HEK293 (cell line): ENCODE measurements at regions of chr1 and their contacts with region 1.

Region 1: DNA sequence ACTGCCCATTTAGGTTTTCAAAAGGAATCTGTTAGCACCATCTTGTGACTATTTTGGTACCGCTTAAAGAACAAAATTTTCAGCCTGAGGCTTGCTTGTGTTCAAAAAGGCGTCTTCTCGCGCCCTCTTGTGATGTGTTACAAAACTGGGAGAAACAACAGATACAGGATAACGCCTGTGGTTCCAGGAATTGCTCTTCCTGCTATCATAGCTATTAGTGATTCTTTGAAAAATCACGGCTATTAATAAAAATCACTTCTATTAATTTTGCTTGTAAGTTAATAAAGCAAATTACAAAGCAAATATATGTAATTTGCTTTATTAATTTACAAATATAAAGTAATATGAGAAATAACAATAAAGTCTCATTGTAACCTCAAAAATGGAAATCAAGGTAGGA is 82.2 kb upstream of the ABCD3 start:
- H3K4me3 ChIP-seq: no peak overlapping the region
- H3K27ac ChIP-seq: no peak overlapping the region
- H3K4me1 ChIP-seq: no peaks in the 10 kb centered on the region
- CTCF ChIP-seq: peak; percentile 78

Region 2: DNA sequence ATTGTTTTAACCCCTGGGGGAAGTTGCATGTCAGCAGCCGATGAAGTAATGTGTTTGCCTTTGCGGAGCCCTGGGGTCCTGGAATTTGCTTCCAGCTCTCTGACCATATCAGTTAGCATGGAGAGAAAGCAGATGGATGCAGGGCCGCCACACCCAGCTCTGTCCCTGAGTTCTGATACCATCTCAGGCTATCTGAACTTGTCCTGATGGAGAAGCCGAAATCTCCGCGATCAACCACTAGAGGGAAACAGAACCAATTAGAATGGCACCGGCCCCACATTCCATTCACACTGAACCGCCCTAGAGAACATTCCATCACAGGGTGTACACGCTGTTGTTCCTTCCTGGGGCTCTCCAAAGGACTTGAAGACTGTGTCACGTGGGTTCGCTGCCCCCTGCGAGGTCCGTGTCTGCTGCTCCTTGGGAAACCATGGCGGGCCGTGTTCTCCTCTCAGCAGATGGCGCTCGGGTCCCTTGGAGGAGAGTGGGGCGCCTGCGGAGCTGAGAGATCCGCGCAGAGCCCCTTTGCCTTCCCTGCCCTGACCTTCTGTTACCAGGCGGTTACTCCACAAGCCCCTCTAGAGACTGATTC is 290.4 kb before region 1 on chr1:
- CTCF ChIA-PET with region 1: interaction called, 400 read pairs
- POLR2A ChIA-PET with region 1: no interaction called
- H3K4me3 ChIP-seq: no peak overlapping the region
- H3K27ac ChIP-seq: no peak overlapping the region
- H3K4me1 ChIP-seq: no peaks in the 10 kb centered on the region
- CTCF ChIP-seq: peak; percentile 75

Region 3: GRCh38 chr1:94209425-94209824 is 126.5 kb before region 1 on chr1:
- CTCF ChIA-PET with region 1: interaction called, 10 read pairs
- POLR2A ChIA-PET with region 1: no interaction called
- H3K4me3 ChIP-seq: no peak overlapping the region
- H3K27ac ChIP-seq: no peak overlapping the region
- H3K4me1 ChIP-seq: no peaks in the 10 kb centered on the region
- CTCF ChIP-seq: no peak

Region 4: GRCh38 chr1:94247138-94248094 is 88.5 kb before region 1 on chr1:
- CTCF ChIA-PET with region 1: interaction called, 35 read pairs
- POLR2A ChIA-PET with region 1: no interaction called
- H3K4me3 ChIP-seq: peak overlapping the region; percentile 76
- H3K27ac ChIP-seq: peak overlapping the region; percentile 64; the same call in 1 of the 2 replicates
- H3K4me1 ChIP-seq: no peaks in the 10 kb centered on the region
- CTCF ChIP-seq: no peak

Region 5: DNA sequence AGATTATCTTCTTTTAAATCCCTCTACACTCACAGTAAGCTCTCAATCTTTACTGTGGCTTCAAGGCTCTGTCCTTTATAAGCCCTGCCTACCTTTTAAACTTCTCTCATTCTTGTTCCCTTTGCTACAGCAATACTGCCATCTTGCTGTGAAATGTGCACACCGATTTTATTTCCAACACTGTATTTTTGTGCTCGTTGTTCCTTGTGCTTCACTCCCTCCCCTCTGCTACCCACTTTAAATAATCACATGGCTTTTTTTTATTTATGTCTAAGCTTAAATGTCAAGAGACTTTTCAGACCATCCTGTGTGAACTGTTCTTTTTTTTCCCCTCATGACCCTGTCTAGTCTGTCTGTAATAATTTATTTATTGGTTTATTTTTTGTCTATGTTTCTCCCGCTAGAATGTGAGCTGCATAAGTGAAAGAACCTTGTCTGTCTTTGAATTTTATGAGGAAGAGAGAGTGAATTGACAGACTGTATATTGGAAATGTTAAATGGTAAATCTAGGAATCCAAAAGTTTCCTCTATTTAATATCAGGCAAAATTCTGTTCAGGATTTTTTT is 127.9 kb after region 1 on chr1:
- CTCF ChIA-PET with region 1: interaction called, 51 read pairs
- POLR2A ChIA-PET with region 1: no interaction called
- H3K4me3 ChIP-seq: no peak overlapping the region
- H3K27ac ChIP-seq: no peak overlapping the region
- H3K4me1 ChIP-seq: no peaks in the 10 kb centered on the region
- CTCF ChIP-seq: no peak

Region 6: GRCh38 chr1:94541175-94542087 is 205.5 kb after region 1 on chr1 and contains the start of gene F3:
- CTCF ChIA-PET with region 1: no interaction called
- POLR2A ChIA-PET with region 1: no interaction called
- H3K4me3 ChIP-seq: peak within 1 kb of the TSS; percentile 78
- H3K27ac ChIP-seq: peak within 1 kb of the TSS; percentile 75; the same call in 1 of the 2 replicates
- H3K4me1 ChIP-seq: peaks cover 4% of the 10 kb centered on the region; the same call in 1 of the 2 replicates
- CTCF ChIP-seq: peak; percentile 50

Region 7: DNA sequence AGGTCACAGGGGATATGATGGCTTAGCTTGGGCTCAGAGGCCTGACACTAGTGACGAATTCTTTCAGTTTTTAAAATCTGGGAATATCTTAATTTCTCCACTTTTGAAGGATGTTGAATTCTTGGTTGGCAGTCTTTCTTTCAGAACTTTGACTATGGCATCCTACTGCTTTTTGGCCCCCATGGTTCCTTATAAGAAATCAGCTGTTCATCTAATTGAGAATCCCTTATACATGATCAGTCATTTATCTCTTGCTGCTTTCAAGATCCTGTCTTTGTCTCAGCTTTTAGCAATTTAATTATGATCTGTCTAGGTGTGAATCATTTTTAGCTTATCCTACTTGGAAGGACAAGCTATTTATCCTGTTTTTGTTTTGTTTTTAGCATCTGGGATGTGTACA is 236.8 kb after region 1 on chr1:
- CTCF ChIA-PET with region 1: no interaction called
- POLR2A ChIA-PET with region 1: no interaction called
- H3K4me3 ChIP-seq: no peak overlapping the region
- H3K27ac ChIP-seq: no peak overlapping the region
- H3K4me1 ChIP-seq: no peaks in the 10 kb centered on the region
- CTCF ChIP-seq: no peak